ENCODE measurements at regions of chr11 and their contacts with region 1.

Region 1: DNA sequence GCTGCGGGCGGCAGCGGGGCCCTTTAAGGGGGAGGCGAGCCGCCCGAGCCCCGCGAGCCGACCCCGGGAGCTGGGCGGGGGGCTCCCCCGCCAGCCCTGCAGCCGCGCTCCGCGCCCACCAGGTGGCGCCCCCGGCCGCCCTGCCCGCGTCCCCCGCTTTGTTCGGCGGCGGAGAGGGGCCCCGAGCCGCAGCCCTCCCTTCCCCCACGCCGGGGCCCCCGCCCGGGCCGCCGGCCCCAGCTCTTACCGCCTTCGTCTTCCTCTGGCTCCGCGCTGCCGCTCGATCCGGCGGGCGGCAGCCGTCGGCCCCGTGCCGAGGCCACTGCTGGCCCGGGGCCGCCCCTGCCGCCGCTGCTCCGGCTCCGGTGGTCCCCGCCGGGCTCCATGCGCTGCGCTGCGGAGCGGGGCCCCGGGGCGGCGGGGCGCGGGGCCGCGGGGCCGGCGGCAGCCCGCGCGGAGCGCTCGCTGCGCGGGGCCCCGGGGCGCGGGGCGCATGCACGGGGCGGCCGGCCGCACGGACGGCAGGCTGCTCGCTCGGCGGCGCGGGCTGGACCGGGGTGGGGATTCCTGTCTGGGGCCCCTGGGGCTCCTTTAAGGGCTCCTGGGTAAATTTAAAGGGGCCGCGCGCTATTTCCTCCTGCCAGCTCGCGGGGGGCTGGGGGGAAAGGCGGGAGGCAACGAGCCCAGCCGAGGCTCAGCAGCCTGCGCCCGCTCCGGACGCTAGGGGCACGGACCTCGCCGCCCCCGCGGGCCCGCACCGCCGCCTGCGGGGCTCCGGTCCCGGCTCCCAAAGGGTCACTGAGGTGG is at the start of gene ZFTA:
- DNase-seq: peak; percentile 39
- H3K4me3 ChIP-seq: peak within 1 kb of the TSS; percentile 67 to 79
- H3K27ac ChIP-seq: peak within 1 kb of the TSS; percentile 72 to 82
- H3K4me1 ChIP-seq: no peaks in the 10 kb centered on the region
- H3K27me3 ChIP-seq: no peaks in the 10 kb centered on the region
- CTCF ChIP-seq: peak; percentile 52 to 93 (median 84)
- POLR2A ChIP-seq: no peak
- total RNA-seq, gene ZFTA: 13.9 to 32.7 TPM

Region 2: GRCh38 chr11:63813035-63813562 is 44.7 kb after region 1 on chr11 and contains the start of gene SPINDOC:
- intact Hi-C with region 1: loop called (anchors 5 kb)
- DNase-seq: peak; percentile 74
- H3K4me3 ChIP-seq: peak within 1 kb of the TSS; percentile 79 to 88
- H3K27ac ChIP-seq: peak within 1 kb of the TSS; percentile 78 to 79
- H3K4me1 ChIP-seq: peaks cover 9% of the 10 kb centered on the region
- H3K27me3 ChIP-seq: no peaks in the 10 kb centered on the region
- CTCF ChIP-seq: no peak
- POLR2A ChIP-seq: peak; percentile 53
- total RNA-seq, gene SPINDOC: 17.8 to 36.2 TPM

Region 3: DNA sequence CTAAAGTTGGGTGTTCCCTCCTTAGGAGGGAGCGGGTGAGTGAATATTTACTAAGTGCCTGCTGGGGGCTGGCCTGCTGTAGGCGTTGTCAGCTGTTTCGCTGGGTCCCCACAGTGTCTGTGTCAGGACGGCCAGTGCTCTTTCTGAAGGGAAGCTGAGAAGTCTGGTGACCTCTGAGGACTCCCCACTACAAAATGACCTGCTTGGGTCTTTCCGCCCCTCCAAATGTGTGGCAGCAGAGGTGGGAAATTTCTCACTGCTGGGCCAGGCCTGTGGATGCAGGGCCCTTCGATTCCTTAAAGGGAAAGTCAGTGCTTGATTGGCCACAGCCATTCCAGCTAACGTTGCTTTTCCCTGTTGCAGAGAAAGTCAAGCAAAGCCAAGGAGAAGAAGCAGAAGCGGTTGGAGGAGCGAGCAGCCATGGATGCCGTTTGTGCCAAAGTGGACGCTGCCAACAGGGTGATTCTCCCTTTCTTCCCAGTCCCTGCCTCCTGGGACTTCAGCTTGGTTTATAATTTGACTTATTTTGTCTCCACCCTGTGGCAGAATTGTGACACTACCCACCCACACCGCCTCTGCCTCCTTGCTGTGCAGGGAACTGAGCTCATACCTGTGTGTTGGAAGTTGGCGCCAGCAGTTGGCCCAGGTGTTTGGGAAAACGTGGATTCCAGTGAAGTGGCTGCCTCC is 177.2 kb after region 1 on chr11:
- intact Hi-C with region 1: loop called (anchors 2 kb)
- DNase-seq: peak; percentile 85
- H3K4me3 ChIP-seq: no peak overlapping the region
- H3K27ac ChIP-seq: peak overlapping the region; percentile 14 to 19
- H3K4me1 ChIP-seq: no peaks in the 10 kb centered on the region
- H3K27me3 ChIP-seq: no peaks in the 10 kb centered on the region
- CTCF ChIP-seq: peak; percentile 50 to 96 (median 85)
- POLR2A ChIP-seq: no peak

Region 4: DNA sequence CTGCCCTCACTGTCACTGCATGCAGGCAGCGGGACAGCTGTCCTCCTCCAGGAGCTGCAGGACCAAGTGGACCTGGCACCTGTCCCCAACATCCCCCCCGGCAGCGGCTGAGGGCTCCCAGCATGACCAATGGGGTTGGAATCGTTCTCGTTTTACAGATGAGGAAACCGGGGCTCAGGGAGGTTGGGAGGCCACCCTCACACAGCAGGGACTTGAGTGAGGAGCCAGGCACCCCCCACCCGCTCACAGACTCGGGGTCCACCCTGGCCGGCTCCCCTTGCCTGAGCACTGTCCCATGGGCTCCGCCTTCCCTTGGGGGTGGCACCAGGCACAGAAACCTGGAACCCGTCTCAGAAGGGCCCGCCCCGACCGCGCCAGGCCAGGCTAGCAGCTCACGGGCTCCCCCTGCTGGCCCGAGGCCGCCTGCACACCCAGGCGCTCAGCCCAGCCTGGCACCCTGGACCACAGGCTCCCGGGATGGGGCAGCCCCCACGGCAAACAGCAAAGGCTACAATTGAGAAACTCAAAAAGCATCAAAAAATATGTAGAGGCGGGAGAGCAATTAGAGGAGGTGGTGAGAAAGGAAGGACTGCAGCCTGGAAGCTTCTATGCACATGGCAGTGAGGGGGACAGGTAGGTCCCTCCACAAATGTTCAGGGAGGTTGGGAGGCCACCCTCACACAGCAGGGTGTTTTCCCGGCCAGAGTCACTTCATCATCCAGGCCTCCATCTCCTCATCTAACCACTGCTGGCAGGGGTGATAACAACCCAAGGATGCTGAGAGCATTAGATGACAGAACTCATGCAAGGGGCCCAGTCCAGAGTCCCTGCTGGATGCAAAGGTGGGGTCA is 384.6 kb after region 1 on chr11:
- intact Hi-C with region 1: loop called (anchors 5 kb)
- DNase-seq: peak; percentile 52
- H3K4me3 ChIP-seq: no peak overlapping the region
- H3K27ac ChIP-seq: no peak overlapping the region
- H3K4me1 ChIP-seq: peaks cover 5% of the 10 kb centered on the region
- H3K27me3 ChIP-seq: no peaks in the 10 kb centered on the region
- CTCF ChIP-seq: peak; percentile 94 to 99 (median 97)
- POLR2A ChIP-seq: no peak

Measured in prostate gland (tissue), 2 donors.